ENCODE measurements at regions of chr5 and their contacts with region 1.

Region 1: DNA sequence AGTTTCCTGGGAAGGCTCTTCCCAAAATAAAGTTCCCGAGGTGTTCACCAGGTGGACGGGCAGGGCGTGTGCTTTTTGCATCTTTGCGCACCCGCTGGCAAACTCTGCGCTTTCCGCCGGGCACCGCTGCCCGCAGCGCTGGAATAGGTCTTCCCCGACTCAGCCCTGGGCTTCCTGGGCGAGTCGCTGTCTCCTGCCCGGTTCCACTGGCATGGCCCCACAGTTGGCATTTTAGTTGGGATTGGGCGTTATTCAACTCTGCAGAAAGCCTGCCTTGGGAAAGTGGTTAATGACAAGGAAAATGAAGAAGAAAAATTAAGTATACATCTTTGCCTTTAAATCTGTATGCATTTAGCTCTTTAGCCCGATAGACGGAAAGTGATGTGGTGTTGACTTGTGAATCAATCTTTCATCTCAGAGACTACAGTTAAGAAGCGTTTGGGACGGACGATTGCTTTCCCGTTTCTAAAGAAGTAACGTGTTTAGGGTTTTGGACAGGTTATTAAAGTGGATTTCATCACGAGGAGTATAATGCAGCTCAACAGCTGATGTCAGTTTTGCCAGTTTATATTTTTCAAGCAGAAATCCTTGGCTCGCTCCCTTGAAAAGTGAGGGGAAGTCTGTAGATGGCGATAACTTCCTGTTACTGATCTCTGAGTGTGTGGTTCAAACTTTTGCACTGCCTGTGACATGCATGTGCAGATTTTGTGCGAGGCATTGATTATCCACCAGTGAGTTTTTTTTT is 944 bp downstream of the ADCY2 start:
- DNase-seq: peak; percentile 27
- ATAC-seq: no peak
- H3K4me3 Mint-ChIP-seq: peak overlapping the region; percentile 90
- H3K27ac Mint-ChIP-seq: peak overlapping the region; percentile 73
- H3K4me1 Mint-ChIP-seq: peaks cover 72% of the 10 kb centered on the region
- H3K27me3 Mint-ChIP-seq: no peaks in the 10 kb centered on the region; the same call in 1 of the 2 replicates
- CTCF ChIP-seq: no peak

Region 2: GRCh38 chr5:7078901-7079300 is 318.0 kb before region 1 on chr5:
- CTCF ChIA-PET with region 1: interaction called, 17 read pairs
- POLR2A ChIA-PET with region 1: no interaction called
- DNase-seq: peak; percentile 50
- ATAC-seq: peak; percentile 68
- H3K4me3 Mint-ChIP-seq: peak overlapping the region; percentile 25; the same call in 1 of the 2 replicates
- H3K27ac Mint-ChIP-seq: 0 out of 2 replicates have a peak overlapping the region, but pooled peaks have one; percentile 12
- H3K4me1 Mint-ChIP-seq: peaks cover 50% of the 10 kb centered on the region
- H3K27me3 Mint-ChIP-seq: no peaks in the 10 kb centered on the region
- CTCF ChIP-seq: no peak

Region 3: DNA sequence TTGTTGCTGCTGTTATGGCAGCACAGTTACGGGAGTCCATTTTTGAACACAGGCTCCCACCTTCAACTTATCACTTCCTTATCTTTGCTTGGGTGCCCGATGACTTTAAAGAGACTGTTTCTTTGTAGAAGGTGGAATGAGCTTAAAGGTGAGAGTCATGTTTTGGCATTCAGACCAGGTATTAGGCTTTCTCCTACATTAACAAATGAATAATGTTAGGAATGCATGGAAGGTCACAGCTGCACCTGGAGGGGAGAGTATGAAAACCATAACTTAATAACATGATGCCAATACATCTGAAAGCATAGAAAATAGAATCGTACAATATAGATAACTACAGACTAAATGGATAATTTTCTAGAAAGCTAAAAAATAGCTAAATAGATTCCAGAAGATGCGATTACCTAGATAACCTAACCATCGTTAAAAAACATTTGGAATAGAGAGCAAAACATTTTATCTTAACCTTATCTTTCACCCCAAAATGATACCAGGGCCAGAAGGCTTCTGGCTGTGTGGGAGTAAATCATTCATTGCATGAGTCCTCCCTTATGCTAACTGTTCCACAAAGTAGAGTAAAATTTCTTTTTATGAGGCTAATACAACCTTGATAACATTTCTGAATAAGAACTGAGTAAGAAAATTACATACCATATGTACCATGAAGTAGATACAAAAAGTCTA is 127.1 kb before region 1 on chr5:
- CTCF ChIA-PET with region 1: interaction called, 15 read pairs
- POLR2A ChIA-PET with region 1: interaction called, 6 read pairs
- DNase-seq: no peak
- ATAC-seq: peak; percentile 73
- H3K4me3 Mint-ChIP-seq: no peak overlapping the region
- H3K27ac Mint-ChIP-seq: peak overlapping the region; percentile 97
- H3K4me1 Mint-ChIP-seq: peaks cover 60% of the 10 kb centered on the region
- H3K27me3 Mint-ChIP-seq: peaks cover 16% of the 10 kb centered on the region
- CTCF ChIP-seq: no peak

Region 4: DNA sequence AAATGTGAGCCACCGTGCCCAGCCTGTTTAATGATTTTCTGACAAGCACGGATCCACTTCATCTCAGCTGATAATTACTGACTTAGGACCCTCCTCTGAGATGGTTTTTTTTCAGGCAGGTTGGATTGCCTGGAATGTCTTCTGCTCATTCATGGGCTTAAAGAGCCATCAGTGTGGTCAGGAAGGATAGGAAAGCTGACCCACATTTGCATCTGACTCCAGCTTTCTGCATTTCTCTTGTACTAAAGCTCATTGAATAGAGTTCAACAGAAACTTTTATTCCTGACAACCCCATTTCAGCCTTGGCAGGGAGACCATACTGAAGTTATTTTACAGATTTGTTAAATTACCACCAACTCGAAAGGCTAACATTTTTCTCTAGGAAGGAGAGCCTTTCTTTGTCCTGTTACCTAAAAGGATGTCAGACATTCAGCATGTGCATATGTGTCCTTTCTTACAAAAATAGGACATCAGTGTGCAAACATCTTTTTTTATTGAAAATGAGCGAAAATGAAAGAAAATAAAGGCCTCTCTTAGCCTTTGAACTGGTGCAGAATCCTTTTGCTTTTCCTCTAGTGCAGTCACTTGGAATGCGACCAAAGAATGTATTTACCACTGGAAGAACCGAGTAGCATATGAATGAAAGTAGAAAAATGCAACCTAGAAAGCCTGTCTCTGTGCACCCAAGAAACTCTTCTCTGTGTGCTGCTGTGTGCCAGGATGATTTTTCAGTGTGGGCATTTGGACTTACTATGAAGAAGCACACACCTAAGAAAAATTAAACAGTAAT is 25.6 kb after region 1 on chr5:
- CTCF ChIA-PET with region 1: interaction called, 12 read pairs
- POLR2A ChIA-PET with region 1: no interaction called
- DNase-seq: no peak
- ATAC-seq: peak; percentile 17
- H3K4me3 Mint-ChIP-seq: peak overlapping the region; percentile 41
- H3K27ac Mint-ChIP-seq: peak overlapping the region; percentile 91
- H3K4me1 Mint-ChIP-seq: peaks cover 96% of the 10 kb centered on the region
- H3K27me3 Mint-ChIP-seq: no peaks in the 10 kb centered on the region
- CTCF ChIP-seq: no peak

Measured in WTC11 (cell line).